ENCODE measurements at regions of chr14 and their contacts with region 1.

Region 1: GRCh38 chr14:22653012-22653621 is 9.0 kb upstream of the OR6J1 start:
- DNase-seq: peak; percentile 67
- H3K4me3 ChIP-seq: no peak overlapping the region
- H3K27ac ChIP-seq: no peak overlapping the region
- H3K4me1 ChIP-seq: no peaks in the 10 kb centered on the region
- H3K27me3 ChIP-seq: no peaks in the 10 kb centered on the region
- CTCF ChIP-seq: peak; percentile 95 to 98

Region 2: GRCh38 chr14:22386924-22387775 is 266.0 kb before region 1 on chr14:
- CTCF ChIA-PET with region 1: interaction called, 3 read pairs
- dilution Hi-C with region 1: no loop called
- in situ Hi-C with region 1: loop called in 1 of 2 experiments (anchors 10 kb)
- intact Hi-C with region 1: loop called (anchors 1 kb)
- DNase-seq: peak; percentile 39
- H3K4me3 ChIP-seq: no peak overlapping the region
- H3K27ac ChIP-seq: no peak overlapping the region
- H3K4me1 ChIP-seq: peaks cover 16% of the 10 kb centered on the region
- H3K27me3 ChIP-seq: peaks cover 4% of the 10 kb centered on the region
- CTCF ChIP-seq: peak; percentile 48 to 77

Region 3: GRCh38 chr14:22570132-22570949 is 82.8 kb before region 1 on chr14:
- CTCF ChIA-PET with region 1: interaction called, 22 read pairs
- dilution Hi-C with region 1: no loop called
- in situ Hi-C with region 1: loop called in 1 of 2 experiments (anchors 5 kb)
- intact Hi-C with region 1: loop called (anchors 1 kb)
- DNase-seq: peak; percentile 66
- H3K4me3 ChIP-seq: no peak overlapping the region
- H3K27ac ChIP-seq: peak overlapping the region; percentile 46
- H3K4me1 ChIP-seq: peaks cover 10% of the 10 kb centered on the region
- H3K27me3 ChIP-seq: no peaks in the 10 kb centered on the region
- CTCF ChIP-seq: peak; percentile 52 to 67

Region 4: DNA sequence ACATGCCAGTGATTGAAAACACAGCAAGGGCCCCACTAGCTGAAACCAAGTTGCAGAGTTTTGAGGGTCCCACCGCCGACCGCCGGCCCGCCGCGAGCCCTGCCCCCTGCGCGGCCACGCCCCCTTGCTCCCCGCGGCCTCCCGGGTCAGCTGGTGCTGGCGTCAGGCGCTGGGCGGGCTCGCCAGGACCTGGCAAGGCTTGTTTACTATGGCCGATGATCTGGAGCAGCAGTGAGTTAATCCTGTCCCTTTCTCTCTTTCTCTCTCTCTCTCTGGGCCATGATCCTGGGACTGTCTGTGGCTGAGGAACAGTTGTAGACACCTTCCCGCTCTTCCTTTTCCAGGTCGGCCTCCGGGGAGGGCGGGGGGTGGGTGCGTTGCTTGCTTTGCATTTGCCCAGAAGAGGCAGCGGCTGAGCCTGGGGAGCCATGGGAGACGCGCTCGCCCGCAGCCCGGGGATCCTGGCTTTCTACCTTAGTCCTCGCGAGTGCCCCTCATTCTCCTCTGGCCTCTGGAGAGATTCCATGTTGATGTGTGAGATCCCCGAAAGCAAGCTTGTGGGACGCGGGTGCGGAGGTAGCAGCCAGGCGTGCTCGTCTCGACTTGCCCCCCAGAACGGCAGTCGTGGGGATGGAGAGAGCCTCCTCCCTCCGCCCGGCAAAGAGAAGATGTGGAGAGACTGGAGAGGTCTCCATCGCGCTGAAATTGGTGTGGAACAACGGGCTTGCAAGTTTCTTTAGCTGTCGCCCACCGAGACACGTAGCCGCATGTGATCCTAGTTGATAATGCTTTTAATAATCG is 54.8 kb before region 1 on chr14 and contains the start of gene ABHD4:
- CTCF ChIA-PET with region 1: no interaction called
- dilution Hi-C with region 1: no loop called
- in situ Hi-C with region 1: no loop called
- intact Hi-C with region 1: loop called (anchors 2 kb)
- DNase-seq: peak; percentile 65
- H3K4me3 ChIP-seq: peak within 1 kb of the TSS; percentile 77 to 91 (median 90)
- H3K27ac ChIP-seq: peak within 1 kb of the TSS; percentile 85
- H3K4me1 ChIP-seq: peaks cover 28% of the 10 kb centered on the region
- H3K27me3 ChIP-seq: no peaks in the 10 kb centered on the region
- CTCF ChIP-seq: no peak
- total RNA-seq, gene ABHD4: 16.7 to 20.5 TPM

Region 5: DNA sequence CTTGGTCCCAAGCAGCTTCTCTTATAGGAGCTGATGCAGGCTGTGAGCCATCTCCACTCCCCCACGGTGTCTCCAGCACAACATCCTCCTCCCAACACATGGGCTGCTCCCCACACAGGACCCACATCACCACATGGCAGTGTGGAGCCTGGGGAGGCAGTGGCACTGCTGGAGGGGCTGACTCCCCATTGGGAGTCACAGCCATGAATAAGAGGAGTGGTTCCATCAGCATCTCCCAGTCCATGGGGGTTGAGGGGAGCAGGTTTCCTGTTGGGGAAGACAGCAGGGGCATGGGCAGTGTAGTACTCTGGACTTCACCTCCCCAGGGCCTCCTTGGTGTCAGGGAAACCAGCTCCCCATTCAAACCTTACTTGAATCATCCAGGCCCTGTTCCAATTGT is 72.9 kb after region 1 on chr14:
- CTCF ChIA-PET with region 1: no interaction called
- dilution Hi-C with region 1: no loop called
- in situ Hi-C with region 1: no loop called
- intact Hi-C with region 1: no loop called
- DNase-seq: no peak
- H3K4me3 ChIP-seq: no peak overlapping the region
- H3K27ac ChIP-seq: no peak overlapping the region
- H3K4me1 ChIP-seq: no peaks in the 10 kb centered on the region
- H3K27me3 ChIP-seq: no peaks in the 10 kb centered on the region
- CTCF ChIP-seq: no peak

Region 6: GRCh38 chr14:22781586-22781991 is 128.5 kb after region 1 on chr14:
- CTCF ChIA-PET with region 1: no interaction called
- dilution Hi-C with region 1: no loop called
- in situ Hi-C with region 1: no loop called
- intact Hi-C with region 1: loop called (anchors 5 kb)
- DNase-seq: peak; percentile 14
- H3K4me3 ChIP-seq: no peak overlapping the region
- H3K27ac ChIP-seq: no peak overlapping the region
- H3K4me1 ChIP-seq: no peaks in the 10 kb centered on the region
- H3K27me3 ChIP-seq: no peaks in the 10 kb centered on the region
- CTCF ChIP-seq: no peak

Region 7: DNA sequence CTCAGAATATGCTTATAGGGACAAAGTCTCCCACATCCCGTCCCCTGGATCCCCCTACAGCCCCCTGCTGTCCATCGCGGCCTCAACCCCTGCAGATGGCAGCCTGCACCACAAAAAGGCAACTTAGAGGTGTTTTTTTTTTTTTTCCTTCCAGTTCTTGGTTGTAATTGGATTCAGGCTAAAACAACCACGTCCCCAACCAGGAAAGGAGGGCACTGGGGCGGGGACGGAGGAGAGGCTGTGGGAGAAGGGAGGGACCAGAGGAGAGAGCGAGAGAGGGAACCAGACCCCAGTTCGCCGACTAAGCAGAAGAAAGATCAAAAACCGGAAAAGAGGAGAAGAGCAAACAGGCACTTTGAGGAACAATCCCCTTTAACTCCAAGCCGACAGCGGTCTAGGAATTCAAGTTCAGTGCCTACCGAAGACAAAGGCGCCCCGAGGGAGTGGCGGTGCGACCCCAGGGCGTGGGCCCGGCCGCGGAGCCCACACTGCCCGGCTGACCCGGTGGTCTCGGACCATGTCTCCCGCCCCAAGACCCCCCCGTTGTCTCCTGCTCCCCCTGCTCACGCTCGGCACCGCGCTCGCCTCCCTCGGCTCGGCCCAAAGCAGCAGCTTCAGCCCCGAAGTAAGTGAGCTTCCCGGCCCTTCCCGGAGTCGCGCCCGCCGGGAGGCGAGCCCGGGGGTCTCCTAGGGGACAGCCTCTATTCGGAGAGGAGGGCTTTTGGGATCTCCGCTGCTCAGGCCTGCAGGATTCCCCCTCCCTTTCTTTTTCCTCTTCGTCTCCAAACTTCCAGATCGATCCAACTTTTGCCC is 183.4 kb after region 1 on chr14 and contains the start of gene MMP14:
- CTCF ChIA-PET with region 1: interaction called, 4 read pairs
- dilution Hi-C with region 1: no loop called
- in situ Hi-C with region 1: no loop called
- intact Hi-C with region 1: loop called (anchors 1 kb)
- DNase-seq: peak; percentile 86
- H3K4me3 ChIP-seq: peak within 1 kb of the TSS; percentile 84 to 94 (median 86)
- H3K27ac ChIP-seq: peak within 1 kb of the TSS; percentile 86
- H3K4me1 ChIP-seq: peaks cover 24% of the 10 kb centered on the region
- H3K27me3 ChIP-seq: no peaks in the 10 kb centered on the region
- CTCF ChIP-seq: peak in 1 of 2 donors; percentile 57
- total RNA-seq, gene MMP14: 525 to 766 TPM

Region 8: DNA sequence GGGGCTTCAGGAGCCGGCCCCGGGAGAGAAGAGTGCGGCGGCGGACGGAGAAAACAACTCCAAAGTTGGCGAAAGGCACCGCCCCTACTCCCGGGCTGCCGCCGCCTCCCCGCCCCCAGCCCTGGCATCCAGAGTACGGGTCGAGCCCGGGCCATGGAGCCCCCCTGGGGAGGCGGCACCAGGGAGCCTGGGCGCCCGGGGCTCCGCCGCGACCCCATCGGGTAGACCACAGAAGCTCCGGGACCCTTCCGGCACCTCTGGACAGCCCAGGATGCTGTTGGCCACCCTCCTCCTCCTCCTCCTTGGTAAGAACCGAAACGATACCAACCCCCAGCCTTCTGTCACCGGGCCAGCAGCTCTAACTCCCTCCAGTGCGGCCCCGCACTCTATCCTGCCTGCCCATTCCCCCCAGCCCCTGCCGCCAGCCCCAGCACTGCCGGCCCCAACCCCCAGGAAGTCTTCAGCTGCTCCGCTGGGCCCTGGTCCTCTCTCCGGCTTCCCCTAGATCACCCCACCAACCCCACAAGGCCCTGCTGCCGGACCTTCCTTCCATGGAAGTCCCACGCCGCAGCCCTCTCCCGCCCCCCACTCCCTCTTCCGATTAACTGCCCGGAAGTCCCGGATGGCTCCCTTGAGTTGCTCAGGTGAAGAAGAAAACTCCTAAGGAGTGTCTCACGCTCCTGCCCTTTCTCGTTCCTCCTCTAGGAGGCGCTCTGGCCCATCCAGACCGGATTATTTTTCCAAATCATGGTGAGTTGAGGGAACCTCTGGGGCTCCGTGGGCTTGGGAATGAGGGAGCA is 219.1 kb after region 1 on chr14:
- CTCF ChIA-PET with region 1: no interaction called
- dilution Hi-C with region 1: no loop called
- in situ Hi-C with region 1: loop called in 1 of 2 experiments (anchors 25 kb)
- intact Hi-C with region 1: no loop called
- DNase-seq: peak; percentile 85
- H3K4me3 ChIP-seq: peak overlapping the region; percentile 85 to 90 (median 87)
- H3K27ac ChIP-seq: peak overlapping the region; percentile 85
- H3K4me1 ChIP-seq: peaks cover 12% of the 10 kb centered on the region
- H3K27me3 ChIP-seq: no peaks in the 10 kb centered on the region
- CTCF ChIP-seq: peak; percentile 98

Measured in mammary epithelial cell (primary cell).